ENCODE measurements at regions of chr7 and their contacts with region 1.

Region 1: DNA sequence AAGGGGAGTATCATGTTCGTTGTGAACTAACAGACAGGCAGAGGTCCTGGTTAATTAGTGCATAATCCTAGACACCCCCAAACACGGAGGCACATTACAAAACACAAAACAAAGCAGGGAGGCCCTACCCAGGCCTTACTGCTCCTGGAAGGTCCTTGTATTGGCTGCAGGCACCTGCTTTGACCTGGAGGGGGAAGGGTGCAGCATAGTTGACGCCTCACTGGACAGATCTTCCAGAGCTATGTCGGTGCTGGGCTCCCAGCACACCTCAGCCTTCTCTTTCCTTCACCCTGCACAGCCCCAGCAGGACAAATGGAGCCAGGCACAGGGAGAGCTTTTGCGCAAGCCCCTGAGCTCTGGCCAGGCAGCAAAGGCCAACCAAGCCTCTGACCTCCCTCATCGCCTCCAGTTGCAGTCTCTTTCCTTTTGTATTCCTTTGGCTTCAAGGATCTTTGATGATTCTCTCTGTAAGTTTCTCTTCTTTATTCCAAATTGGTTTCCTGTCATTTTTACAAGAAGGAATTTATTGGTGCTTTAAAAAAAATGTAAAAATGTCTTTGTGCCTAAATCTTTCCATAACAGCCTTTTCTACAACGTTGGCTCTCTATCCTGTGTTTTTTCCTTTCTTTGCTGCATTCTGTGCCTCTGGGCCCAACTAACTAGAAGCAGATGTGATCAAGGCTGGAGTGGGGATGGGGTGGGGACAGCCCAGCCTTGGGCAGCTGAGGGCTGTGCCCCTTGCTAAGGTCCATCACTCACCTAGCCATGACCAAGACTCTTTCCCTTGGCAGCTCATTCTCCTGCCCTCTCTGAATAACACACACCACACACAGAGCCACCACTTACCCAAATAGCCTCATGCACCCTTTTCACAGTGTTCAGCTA is 317.1 kb upstream of the NPVF start:
- DNase-seq: no peak
- H3K4me3 ChIP-seq: no peak overlapping the region
- H3K27ac ChIP-seq: no peak overlapping the region
- H3K27me3 ChIP-seq: peaks cover 0 to 20% (median 0%) of the 10 kb centered on the region in 45 donors
- CTCF ChIP-seq: no peak

Region 2: DNA sequence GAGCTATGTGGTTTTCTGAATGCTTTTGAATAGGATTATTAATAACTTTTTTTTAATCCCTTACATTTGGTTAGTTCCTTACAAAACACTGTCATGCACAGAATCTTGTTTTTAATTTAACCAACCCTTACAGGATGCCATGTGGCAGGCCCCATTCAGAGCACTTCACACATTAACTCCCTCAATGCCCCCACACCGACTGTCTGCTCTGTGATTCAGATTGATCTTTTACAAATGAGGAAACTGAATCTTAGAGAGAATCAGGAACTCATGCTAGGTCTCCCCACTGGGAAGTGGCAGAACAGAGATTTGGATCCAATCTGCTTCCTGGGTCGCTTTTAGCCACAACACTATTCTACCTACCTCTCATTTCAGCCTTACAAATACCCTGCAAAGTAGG is 121.3 kb before region 1 on chr7:
- intact Hi-C with region 1: loop called in 1 of 2 experiments (anchors 5 kb)
- DNase-seq: no peak
- H3K4me3 ChIP-seq: no peak overlapping the region
- H3K27ac ChIP-seq: no peak overlapping the region
- H3K27me3 ChIP-seq: peaks cover 0 to 15% (median 0%) of the 10 kb centered on the region in 45 donors
- CTCF ChIP-seq: no peak

Measured in dorsolateral prefrontal cortex (tissue), 120 donors.